Activated CD4-positive, alpha-beta T cell treated with anti-CD3 and anti-CD28 coated beads for 36 hours (primary cell): ENCODE measurements at regions of chr15 and their contacts with region 1.

Region 1: DNA sequence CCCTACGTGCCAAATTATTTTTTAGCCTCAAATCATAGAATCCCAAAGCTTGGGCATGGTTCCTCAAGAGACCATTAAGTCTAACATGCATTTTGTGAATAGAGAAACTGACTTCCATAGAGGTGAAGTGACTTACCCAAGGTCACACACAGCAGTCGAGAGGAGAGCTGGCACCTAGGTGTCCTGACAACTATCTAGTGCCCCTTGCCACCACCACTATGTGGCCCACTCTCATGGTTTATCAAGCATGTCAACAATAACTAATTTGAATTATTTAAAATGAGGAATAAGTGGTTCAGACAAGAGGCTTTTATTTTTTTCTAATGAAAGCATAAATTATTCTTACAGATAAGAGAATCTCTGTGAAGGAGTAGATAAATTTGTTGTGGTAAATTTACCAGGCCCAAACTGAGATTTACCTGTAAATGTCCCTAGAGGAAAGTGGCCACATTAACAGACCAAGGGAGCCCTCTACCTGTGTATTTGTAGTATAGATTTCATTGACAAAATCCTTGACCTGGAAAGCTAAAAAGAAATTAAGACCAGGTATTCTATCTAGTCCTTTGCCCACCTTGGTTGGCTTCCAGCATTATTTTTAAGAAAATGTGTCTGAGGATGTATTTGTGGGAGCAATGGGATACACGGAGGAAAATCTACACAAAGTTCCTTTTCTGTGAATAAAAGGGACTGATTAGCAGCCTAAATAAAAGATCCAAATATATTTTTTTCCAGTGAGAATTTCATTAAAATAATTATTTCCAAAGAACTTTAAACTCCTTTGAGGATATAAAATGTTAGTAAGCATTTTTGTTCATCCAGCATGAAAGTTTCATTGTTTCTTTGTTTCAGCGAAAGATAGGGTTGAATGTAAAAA is 49.1 kb downstream of the IQCH start:
- DNase-seq: peak; percentile 22
- ATAC-seq: no peak
- H3K4me3 Mint-ChIP-seq: no peak overlapping the region
- H3K27ac Mint-ChIP-seq: no peak overlapping the region
- H3K4me1 Mint-ChIP-seq: peaks cover 16% of the 10 kb centered on the region
- H3K27me3 Mint-ChIP-seq: peaks cover 3% of the 10 kb centered on the region

Region 2: GRCh38 chr15:66946578-66947164 is 357.1 kb before region 1 on chr15:
- CTCF ChIA-PET with region 1: interaction called, 45 read pairs
- POLR2A ChIA-PET with region 1: interaction called, 3 read pairs
- intact Hi-C with region 1: loop called (anchors 1 kb)
- DNase-seq: peak; percentile 85
- ATAC-seq: peak; percentile 70
- H3K4me3 Mint-ChIP-seq: no peak overlapping the region
- H3K27ac Mint-ChIP-seq: no peak overlapping the region
- H3K4me1 Mint-ChIP-seq: peaks cover 3% of the 10 kb centered on the region
- H3K27me3 Mint-ChIP-seq: no peaks in the 10 kb centered on the region

Region 3: DNA sequence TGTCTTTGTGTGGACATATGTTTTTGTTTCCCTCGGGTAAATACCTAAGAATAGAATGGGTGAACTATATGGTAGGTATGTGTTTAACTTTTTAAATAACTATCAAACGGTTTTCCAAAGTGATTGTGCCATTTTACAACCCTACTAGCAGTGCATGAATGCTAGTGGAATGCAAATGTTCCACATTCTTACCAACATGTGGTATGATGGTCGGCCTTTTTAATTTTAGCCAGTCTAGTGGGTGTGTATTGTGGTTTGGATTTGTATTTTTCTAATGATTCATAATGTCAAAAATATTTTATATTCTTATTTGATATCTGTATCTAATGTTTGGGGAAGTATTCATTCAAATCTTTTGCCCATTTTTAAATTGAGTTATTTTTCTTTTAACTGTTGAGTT is 306.5 kb before region 1 on chr15:
- CTCF ChIA-PET with region 1: no interaction called
- POLR2A ChIA-PET with region 1: no interaction called
- intact Hi-C with region 1: no loop called
- DNase-seq: no peak
- ATAC-seq: no peak
- H3K4me3 Mint-ChIP-seq: no peak overlapping the region
- H3K27ac Mint-ChIP-seq: no peak overlapping the region
- H3K4me1 Mint-ChIP-seq: no peaks in the 10 kb centered on the region
- H3K27me3 Mint-ChIP-seq: no peaks in the 10 kb centered on the region

Region 4: DNA sequence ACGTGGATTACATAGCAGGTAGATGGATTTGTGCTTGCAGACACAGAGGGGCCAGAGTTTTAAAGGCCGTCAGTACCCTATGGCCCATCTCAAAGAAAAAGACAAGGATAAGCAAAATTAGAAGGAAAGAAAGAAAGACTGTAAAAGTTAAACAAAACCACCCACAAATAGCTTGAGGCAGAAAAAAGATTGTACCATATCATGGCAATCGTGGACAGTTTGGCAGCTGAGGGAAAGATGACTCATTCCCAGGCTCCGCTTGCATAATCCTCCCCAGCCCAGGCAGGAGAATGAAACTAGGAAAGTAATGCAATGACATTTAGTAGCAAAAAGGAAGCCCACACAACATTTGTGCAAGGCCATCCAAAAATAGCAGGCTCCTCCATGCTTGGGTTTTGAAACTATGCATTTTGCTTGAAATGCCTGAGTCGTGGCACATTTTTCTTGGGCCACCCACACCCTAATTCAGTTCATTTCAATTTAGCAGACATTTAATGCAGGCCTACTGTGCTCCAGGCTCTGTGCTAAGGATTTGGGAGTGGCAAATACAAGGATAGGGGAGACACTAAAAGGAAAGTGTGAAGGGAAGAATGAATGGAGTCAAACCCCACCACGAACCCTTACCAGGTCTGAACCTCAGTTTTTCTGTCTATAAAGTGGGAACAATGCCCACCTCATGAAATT is 279.3 kb before region 1 on chr15:
- CTCF ChIA-PET with region 1: interaction called, 4 read pairs
- POLR2A ChIA-PET with region 1: no interaction called
- intact Hi-C with region 1: loop called in 1 of 2 experiments (anchors 1 kb)
- DNase-seq: peak; percentile 75
- ATAC-seq: peak; percentile 68
- H3K4me3 Mint-ChIP-seq: no peak overlapping the region
- H3K27ac Mint-ChIP-seq: peak overlapping the region; percentile 53
- H3K4me1 Mint-ChIP-seq: peaks cover 34% of the 10 kb centered on the region
- H3K27me3 Mint-ChIP-seq: peaks cover 6% of the 10 kb centered on the region

Region 5: GRCh38 chr15:67175643-67176071 is 128.1 kb before region 1 on chr15:
- CTCF ChIA-PET with region 1: no interaction called
- POLR2A ChIA-PET with region 1: no interaction called
- intact Hi-C with region 1: loop called in 1 of 2 experiments (anchors 5 kb)
- DNase-seq: peak; percentile 75
- ATAC-seq: peak; percentile 76
- H3K4me3 Mint-ChIP-seq: peak overlapping the region; percentile 4
- H3K27ac Mint-ChIP-seq: peak overlapping the region; percentile 92
- H3K4me1 Mint-ChIP-seq: peaks cover 65% of the 10 kb centered on the region
- H3K27me3 Mint-ChIP-seq: no peaks in the 10 kb centered on the region

Region 6: GRCh38 chr15:67731112-67731761 is 427.5 kb after region 1 on chr15:
- CTCF ChIA-PET with region 1: no interaction called
- POLR2A ChIA-PET with region 1: no interaction called
- intact Hi-C with region 1: no loop called
- DNase-seq: no peak
- ATAC-seq: no peak
- H3K4me3 Mint-ChIP-seq: no peak overlapping the region
- H3K27ac Mint-ChIP-seq: no peak overlapping the region
- H3K4me1 Mint-ChIP-seq: peaks cover 12% of the 10 kb centered on the region
- H3K27me3 Mint-ChIP-seq: no peaks in the 10 kb centered on the region

Region 7: DNA sequence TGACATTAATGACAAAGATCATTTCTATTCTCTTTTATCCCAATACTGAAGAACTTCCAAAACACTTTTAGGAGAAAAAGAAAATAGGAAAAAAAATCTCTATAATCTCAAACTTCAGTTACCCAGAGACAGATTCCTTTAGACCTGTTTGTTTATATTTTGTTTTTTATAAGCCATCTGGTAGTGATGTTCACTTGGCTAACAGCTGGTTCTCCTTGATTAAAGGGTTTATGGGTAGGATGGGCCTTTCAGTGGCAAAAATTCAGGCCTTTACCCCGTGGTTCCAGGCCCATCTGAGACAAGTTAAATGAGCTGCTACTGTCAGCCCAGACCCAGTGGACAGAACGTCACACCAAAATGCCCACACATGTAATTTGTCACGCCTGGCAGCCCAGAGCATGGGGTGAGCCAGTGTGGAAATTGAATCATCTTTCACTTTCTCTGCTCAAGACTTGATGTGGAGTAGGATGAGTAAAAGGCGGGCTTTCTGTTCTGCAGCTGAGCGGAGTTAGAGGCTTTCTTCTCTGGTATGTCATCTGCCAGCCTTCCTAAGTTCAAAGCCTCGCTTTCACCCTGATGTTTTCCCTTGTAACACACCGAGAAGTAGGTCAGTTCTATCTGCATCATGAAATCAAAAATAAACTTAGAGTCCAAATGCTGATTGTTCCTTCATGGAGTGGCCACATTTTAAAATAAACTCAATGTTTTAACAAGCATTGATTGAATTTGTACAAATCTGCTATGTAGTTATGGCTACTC is 459.1 kb after region 1 on chr15:
- CTCF ChIA-PET with region 1: no interaction called
- POLR2A ChIA-PET with region 1: no interaction called
- intact Hi-C with region 1: loop called in 1 of 2 experiments (anchors 2 kb)
- DNase-seq: peak; percentile 81
- ATAC-seq: peak; percentile 99
- H3K4me3 Mint-ChIP-seq: no peak overlapping the region
- H3K27ac Mint-ChIP-seq: peak overlapping the region; percentile 79
- H3K4me1 Mint-ChIP-seq: peaks cover 76% of the 10 kb centered on the region
- H3K27me3 Mint-ChIP-seq: no peaks in the 10 kb centered on the region